ENCODE measurements at regions of chr1 and their contacts with region 1.

Region 1: GRCh38 chr1:39196244-39197215 is 8.0 kb upstream of the MACF1 start:
- DNase-seq: no peak
- H3K4me3 ChIP-seq: no peak overlapping the region
- CTCF ChIP-seq: no peak

Region 2: DNA sequence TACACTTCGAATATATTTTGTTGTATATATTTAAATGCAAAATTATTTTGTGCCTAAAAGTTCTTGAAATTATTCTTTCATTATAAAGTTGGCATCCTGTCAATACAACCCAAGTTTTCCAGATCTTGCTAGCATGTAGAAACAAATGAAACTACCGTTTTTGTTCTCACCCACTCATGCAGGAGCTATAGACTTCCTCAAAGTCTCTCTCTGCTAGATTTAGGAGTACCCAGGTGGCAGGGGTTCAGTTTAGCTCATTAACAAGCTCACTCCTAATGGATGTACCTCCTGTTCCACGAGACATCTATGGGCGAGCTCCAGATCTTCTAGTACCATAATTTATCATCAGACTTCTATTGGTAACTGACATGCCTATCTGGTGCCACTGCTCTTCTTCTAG is 759.8 kb before region 1 on chr1:
- CTCF ChIA-PET with region 1: no interaction called
- POLR2A ChIA-PET with region 1: no interaction called
- DNase-seq: no peak
- H3K4me3 ChIP-seq: no peak overlapping the region
- CTCF ChIP-seq: no peak

Region 3: DNA sequence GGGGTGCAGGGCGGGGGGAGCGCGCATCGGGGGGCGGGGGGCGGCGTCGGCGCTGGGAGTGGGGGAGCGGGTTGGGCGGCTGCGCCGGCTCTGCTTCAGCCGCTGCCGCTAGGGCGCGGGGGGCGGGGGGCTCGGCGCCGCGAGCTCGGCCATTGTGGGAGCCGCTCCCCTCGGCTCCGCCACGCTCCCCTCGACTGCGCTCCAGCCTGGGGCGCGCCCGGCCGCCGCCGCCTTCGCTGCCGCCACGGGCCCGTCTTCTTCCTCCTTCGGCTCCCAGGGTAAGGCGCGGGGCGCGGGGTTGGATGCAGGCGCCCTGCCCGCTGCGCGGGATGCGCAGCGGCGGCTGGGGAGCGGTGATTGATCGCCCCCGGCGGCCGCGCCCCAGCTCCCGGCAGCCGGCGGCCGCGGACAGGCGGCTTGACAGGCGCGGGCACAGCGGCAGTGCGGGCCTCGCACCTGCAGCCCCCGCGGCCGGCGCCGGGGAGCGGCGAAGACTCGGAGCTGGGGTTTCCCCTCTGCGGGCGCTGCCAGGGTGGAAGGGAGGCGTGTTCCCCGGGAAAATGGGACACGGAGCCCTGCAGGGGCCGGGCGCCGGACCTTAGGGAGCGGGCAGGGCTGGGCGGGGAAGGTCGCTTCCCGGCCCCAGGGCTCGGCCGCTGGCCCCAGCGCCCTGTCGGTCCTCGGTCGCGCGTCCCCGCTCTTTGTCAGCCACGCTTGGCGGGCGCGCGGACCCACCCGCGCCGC is 115.1 kb before region 1 on chr1:
- CTCF ChIA-PET with region 1: no interaction called
- POLR2A ChIA-PET with region 1: no interaction called
- DNase-seq: no peak
- H3K4me3 ChIP-seq: peak overlapping the region; percentile 59
- CTCF ChIP-seq: no peak

Region 4: DNA sequence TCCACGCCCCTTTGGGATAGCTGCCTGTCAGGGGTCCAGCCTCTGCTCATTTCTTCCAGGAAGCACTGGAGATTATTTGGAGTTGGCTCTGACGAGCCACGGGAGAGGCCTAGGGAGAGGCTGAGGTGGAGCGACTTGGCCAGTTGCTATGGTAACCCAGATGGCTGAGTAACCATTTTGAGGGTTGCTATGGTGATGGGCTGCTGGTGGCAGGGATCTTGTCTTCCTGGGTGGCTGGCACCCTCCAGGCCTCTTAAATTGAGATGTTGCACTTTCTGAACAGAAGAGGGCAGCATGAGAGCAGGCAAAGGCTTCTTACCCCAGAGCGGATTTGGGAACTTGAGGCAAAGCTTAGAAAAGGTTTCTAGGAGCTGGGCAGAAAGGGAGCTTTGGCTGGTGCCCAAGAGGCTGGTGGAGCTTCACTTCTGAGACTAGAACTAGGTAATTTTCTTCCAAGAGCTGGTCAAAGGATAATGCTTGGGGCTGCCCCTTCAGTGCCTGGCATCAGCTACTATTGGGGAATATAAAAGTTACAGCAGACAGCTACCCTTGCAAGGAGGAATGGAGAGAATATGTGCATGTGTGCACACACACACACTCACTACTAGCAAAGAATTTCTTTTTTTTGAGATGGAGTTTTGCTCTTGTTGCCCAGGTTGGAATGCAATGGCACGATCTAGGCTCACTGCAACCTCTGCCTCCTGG is 97.8 kb before region 1 on chr1:
- CTCF ChIA-PET with region 1: interaction called, 81 read pairs
- POLR2A ChIA-PET with region 1: interaction called, 4 read pairs
- DNase-seq: peak; percentile 78
- H3K4me3 ChIP-seq: no peak overlapping the region
- CTCF ChIP-seq: peak; percentile 55

Region 5: GRCh38 chr1:39132505-39133339 is 63.8 kb before region 1 on chr1:
- CTCF ChIA-PET with region 1: interaction called, 98 read pairs
- POLR2A ChIA-PET with region 1: no interaction called
- DNase-seq: no peak
- H3K4me3 ChIP-seq: no peak overlapping the region
- CTCF ChIP-seq: no peak

Region 6: GRCh38 chr1:39158327-39159086 is 38.0 kb before region 1 on chr1:
- CTCF ChIA-PET with region 1: interaction called, 27 read pairs
- POLR2A ChIA-PET with region 1: interaction called, 4 read pairs
- DNase-seq: no peak
- H3K4me3 ChIP-seq: no peak overlapping the region
- CTCF ChIP-seq: no peak

Region 7: DNA sequence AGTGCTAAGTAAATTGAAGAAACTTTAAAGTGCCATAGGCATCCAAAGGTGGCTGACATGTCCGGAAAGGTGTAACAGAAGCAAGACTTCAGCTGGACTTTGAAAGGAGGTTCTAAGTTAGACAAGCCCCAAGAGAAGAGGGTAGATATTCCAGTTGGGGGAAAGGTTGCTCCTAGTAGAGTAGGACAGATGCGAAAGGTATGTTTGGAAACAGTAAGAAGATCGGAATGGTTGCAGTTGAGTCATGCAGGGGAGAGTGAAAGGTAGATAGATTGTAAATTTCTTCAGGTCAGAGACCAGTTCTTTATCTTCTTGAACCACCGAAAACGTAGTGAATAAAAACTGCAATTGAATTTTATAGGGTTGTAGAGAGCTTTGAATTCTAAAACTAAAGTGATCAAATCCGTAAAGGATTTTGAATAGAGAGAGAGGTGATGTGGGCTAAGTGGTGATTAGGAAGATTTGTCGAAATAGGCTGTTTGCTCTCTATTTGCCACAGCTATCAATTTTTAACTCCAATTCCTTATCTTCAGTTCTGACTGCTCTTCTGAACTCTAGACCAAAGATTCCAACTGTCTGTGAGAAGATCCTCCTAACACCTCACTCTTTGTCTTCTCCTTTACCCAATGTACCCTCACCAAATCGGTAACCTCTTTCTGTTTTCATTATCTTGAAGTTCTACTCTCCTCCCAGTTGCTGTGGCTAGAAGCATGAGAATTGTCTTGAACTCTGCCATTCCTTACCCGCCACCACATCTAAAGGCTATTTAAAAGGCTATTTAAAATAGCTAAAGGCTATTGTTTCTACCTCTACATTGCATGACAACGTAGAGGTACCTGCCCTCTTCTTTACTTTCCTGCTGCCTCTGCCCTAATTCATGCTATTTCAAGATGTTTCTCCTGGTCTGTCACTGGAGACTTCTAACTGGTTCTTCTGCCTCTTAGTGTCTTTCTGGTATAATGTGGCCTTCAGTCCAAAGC is 24.7 kb after region 1 on chr1:
- CTCF ChIA-PET with region 1: interaction called, 42 read pairs
- POLR2A ChIA-PET with region 1: no interaction called
- DNase-seq: no peak
- H3K4me3 ChIP-seq: no peak overlapping the region
- CTCF ChIP-seq: no peak

Region 8: DNA sequence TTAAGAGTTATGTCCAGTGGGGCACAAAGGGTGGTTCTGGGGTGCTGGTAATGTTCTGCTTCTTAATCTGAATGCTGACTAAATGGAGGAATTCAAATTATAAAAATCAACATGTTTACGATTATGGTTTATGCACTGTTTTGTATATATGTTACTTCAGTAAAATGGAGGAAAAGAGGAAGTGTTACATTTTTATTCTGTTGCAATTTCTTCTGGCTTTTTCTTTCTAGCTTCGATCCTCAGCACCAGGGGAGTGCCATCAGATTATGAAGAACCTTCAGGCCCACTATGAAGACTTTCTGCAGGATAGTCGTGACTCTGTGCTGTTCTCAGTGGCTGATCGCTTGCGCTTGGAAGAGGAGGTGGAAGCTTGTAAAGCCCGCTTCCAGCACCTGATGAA is 113.5 kb after region 1 on chr1:
- CTCF ChIA-PET with region 1: interaction called, 10 read pairs
- POLR2A ChIA-PET with region 1: no interaction called
- DNase-seq: no peak
- H3K4me3 ChIP-seq: no peak overlapping the region
- CTCF ChIP-seq: no peak